ENCODE measurements at regions of chr10 and their contacts with region 1.

Region 1: GRCh38 chr10:34762607-34763299 is 52.3 kb downstream of the PARD3 start:
- DNase-seq: peak; percentile 50
- ATAC-seq: peak; percentile 91
- H3K4me3 ChIP-seq: no peak overlapping the region
- H3K27ac ChIP-seq: peak overlapping the region; percentile 34
- H3K4me1 ChIP-seq: peaks cover 63% of the 10 kb centered on the region
- H3K27me3 ChIP-seq: no peaks in the 10 kb centered on the region
- CTCF ChIP-seq: no peak
- EP300 ChIP-seq: no peak
- POLR2A ChIP-seq: no peak
- RAD21 ChIP-seq: no peak

Region 2: GRCh38 chr10:34746094-34746493 is 16.7 kb before region 1 on chr10:
- CTCF ChIA-PET with region 1: no interaction called
- POLR2A ChIA-PET with region 1: no interaction called
- in situ Hi-C with region 1: no loop called
- intact Hi-C with region 1: loop called (anchors 2 kb)
- DNase-seq: peak; percentile 71
- ATAC-seq: peak; percentile 93
- H3K4me3 ChIP-seq: no peak overlapping the region
- H3K27ac ChIP-seq: peak overlapping the region; percentile 39
- H3K4me1 ChIP-seq: peaks cover 52% of the 10 kb centered on the region
- H3K27me3 ChIP-seq: no peaks in the 10 kb centered on the region
- CTCF ChIP-seq: no peak
- EP300 ChIP-seq: peak in 1 of 2 experiments; percentile 49; a peak in 1 of 4 replicates
- POLR2A ChIP-seq: no peak
- RAD21 ChIP-seq: no peak